HCT116 (cell line): ENCODE measurements at regions of chr2 and their contacts with region 1.

Region 1: DNA sequence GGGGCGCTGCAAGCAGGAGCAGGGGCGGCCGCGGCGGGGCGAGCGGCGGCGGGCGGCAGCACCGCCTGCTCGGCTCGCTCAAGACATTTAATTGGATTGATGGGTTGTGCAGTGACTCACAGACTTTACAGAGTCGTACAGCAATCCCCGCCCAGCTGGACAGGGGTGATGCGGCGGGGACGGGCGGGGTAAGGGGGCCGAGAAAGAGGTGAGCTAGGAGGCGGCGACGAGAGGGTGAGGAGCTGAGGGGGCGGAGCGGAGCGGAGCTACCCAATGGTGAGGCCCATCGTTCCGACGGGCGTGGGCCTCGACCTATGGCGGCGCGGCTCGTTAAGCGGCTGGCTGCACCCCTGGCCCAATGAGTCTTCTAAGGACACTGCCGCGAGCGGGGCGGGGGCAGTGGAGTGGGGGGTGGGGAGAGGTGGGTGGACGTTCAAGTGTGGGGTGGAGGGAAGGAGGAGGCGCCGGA is 97.1 kb upstream of the SERTAD2 start:
- DNase-seq: peak; percentile 98
- ATAC-seq: peak; percentile 87
- H3K4me3 ChIP-seq: peak overlapping the region; percentile 67 to 71
- H3K27ac ChIP-seq: peak overlapping the region; percentile 75
- H3K4me1 ChIP-seq: peaks cover 36 to 60% of the 10 kb centered on the region in 2 experiments
- H3K27me3 ChIP-seq: no peaks in the 10 kb centered on the region
- CTCF ChIP-seq: no peak
- POLR2A ChIP-seq: peak; percentile 81
- RAD21 ChIP-seq: 0 out of 2 replicates have a peak, but pooled peaks have one; percentile 31

Region 2: DNA sequence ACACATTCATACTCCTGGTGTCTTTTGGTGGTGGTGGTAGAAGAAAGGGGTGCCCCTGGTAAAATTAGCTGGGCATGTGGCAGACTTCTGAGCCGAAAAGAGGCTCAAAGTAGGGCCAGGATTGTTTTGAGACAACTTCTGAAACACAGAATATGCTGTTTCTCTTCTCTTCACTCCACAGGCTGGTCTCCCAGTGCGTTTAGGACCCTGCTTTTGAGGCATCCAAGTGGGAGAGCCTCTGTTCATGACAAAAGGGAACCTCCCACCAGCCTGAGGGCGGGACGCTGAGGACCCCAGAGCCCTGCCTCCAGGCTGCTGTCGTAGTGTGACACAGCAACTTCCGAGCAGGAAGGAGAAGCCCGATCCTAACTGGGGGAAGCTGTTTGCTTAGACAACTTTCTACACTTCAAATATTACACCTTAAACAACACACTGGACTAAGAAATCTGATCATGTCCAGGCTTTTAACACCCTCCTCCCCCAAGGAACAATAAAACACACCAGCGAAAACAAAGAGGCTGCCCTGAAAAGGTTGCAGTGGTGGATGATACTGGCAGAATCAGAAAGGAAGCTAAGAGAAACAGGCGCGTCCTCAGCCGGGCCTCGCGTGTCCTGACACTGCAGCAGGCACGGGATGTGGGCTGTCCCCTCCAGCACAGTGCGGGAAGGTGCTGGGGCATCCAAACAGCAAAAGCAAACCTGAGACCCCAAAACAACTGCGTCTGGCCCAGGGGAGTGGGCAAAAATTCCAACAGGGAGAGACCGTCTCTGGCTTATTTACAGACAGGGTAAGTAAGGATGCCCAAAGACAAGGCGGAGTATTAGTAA is 106.5 kb before region 1 on chr2:
- CTCF ChIA-PET with region 1: interaction called, 6 read pairs
- POLR2A ChIA-PET with region 1: interaction called, 10 read pairs
- RAD21 ChIA-PET with region 1: interaction called, 3 to 4 read pairs
- intact Hi-C with region 1: loop called (anchors 2 kb)
- DNase-seq: peak; percentile 59
- ATAC-seq: peak; percentile 77
- H3K4me3 ChIP-seq: peak overlapping the region; percentile 46 to 57
- H3K27ac ChIP-seq: peak overlapping the region; percentile 95
- H3K4me1 ChIP-seq: peaks cover 74 to 100% of the 10 kb centered on the region in 2 experiments
- H3K27me3 ChIP-seq: no peaks in the 10 kb centered on the region
- CTCF ChIP-seq: no peak
- POLR2A ChIP-seq: peak; percentile 47
- RAD21 ChIP-seq: no peak

Region 3: GRCh38 chr2:64737547-64737946 is 13.3 kb before region 1 on chr2:
- CTCF ChIA-PET with region 1: interaction called, 4 read pairs
- POLR2A ChIA-PET with region 1: interaction called, 12 read pairs
- RAD21 ChIA-PET with region 1: no interaction called
- intact Hi-C with region 1: no loop called
- DNase-seq: no peak
- ATAC-seq: no peak
- H3K4me3 ChIP-seq: no peak overlapping the region
- H3K27ac ChIP-seq: no peak overlapping the region
- H3K4me1 ChIP-seq: peaks cover 0 to 2% of the 10 kb centered on the region in 2 experiments; a peak in 1 of 4 replicates
- H3K27me3 ChIP-seq: no peaks in the 10 kb centered on the region
- CTCF ChIP-seq: no peak
- POLR2A ChIP-seq: no peak
- RAD21 ChIP-seq: no peak

Region 4: GRCh38 chr2:64831134-64831976 is 80.5 kb after region 1 on chr2:
- CTCF ChIA-PET with region 1: interaction called, 11 read pairs
- POLR2A ChIA-PET with region 1: interaction called, 9 read pairs
- RAD21 ChIA-PET with region 1: interaction called in 1 of 2 experiments, 12 read pairs
- intact Hi-C with region 1: loop called (anchors 1 kb)
- DNase-seq: peak; percentile 98
- ATAC-seq: peak; percentile 89
- H3K4me3 ChIP-seq: peak overlapping the region; percentile 21 to 44; a peak in 3 of 4 replicates
- H3K27ac ChIP-seq: peak overlapping the region; percentile 80
- H3K4me1 ChIP-seq: peaks cover 52 to 71% of the 10 kb centered on the region in 2 experiments
- H3K27me3 ChIP-seq: no peaks in the 10 kb centered on the region
- CTCF ChIP-seq: peak in 2 of 3 experiments; percentile 98 to 99; a peak in 4 of 6 replicates
- POLR2A ChIP-seq: peak; percentile 40
- RAD21 ChIP-seq: no peak

Region 5: GRCh38 chr2:64859312-64860212 is 108.7 kb after region 1 on chr2:
- CTCF ChIA-PET with region 1: interaction called, 7 read pairs
- POLR2A ChIA-PET with region 1: interaction called, 16 read pairs
- RAD21 ChIA-PET with region 1: interaction called in 1 of 2 experiments, 6 read pairs
- intact Hi-C with region 1: no loop called
- DNase-seq: peak; percentile 63
- ATAC-seq: peak; percentile 83
- H3K4me3 ChIP-seq: peak overlapping the region; percentile 34 to 47
- H3K27ac ChIP-seq: peak overlapping the region; percentile 97
- H3K4me1 ChIP-seq: peaks cover 42 to 83% of the 10 kb centered on the region in 2 experiments
- H3K27me3 ChIP-seq: no peaks in the 10 kb centered on the region
- CTCF ChIP-seq: peak in 1 of 3 experiments; percentile 19; a peak in 1 of 6 replicates
- POLR2A ChIP-seq: peak; percentile 46
- RAD21 ChIP-seq: no peak